Esophagus muscularis mucosa (tissue), 4 donors: ENCODE measurements at regions of chr3 and their contacts with region 1.

Region 1: GRCh38 chr3:184811999-184812661 is at the start of gene VPS8:
- DNase-seq: peak; percentile 98
- H3K4me3 ChIP-seq: peak within 1 kb of the TSS; percentile 80 to 91 (median 88)
- H3K27ac ChIP-seq: peak within 1 kb of the TSS; percentile 79 to 82 (median 80)
- H3K4me1 ChIP-seq: peaks cover 18 to 27% (median 22%) of the 10 kb centered on the region in 4 donors
- H3K27me3 ChIP-seq: no peaks in the 10 kb centered on the region
- CTCF ChIP-seq: peak; percentile 69 to 85 (median 71)
- EP300 ChIP-seq: no peak
- POLR2A ChIP-seq: peak; percentile 76
- total RNA-seq, gene VPS8: 31.0 to 39.0 (median 32.6) TPM

Region 2: GRCh38 chr3:183884427-183885296 is 927.5 kb before region 1 on chr3 and contains the start of gene PARL:
- intact Hi-C with region 1: loop called (anchors 5 kb)
- DNase-seq: peak; percentile 98
- H3K4me3 ChIP-seq: peak within 1 kb of the TSS; percentile 94 to 98 (median 97)
- H3K27ac ChIP-seq: peak within 1 kb of the TSS; percentile 78 to 86 (median 80)
- H3K4me1 ChIP-seq: peaks cover 23 to 35% (median 27%) of the 10 kb centered on the region in 4 donors
- H3K27me3 ChIP-seq: no peaks in the 10 kb centered on the region
- CTCF ChIP-seq: peak; percentile 95 to 98 (median 96)
- EP300 ChIP-seq: no peak
- POLR2A ChIP-seq: no peak
- total RNA-seq, gene PARL: 40.2 to 57.1 (median 51.2) TPM

Region 3: GRCh38 chr3:184620475-184621119 is 191.5 kb before region 1 on chr3:
- intact Hi-C with region 1: no loop called
- DNase-seq: no peak
- H3K4me3 ChIP-seq: no peak overlapping the region
- H3K27ac ChIP-seq: no peak overlapping the region
- H3K4me1 ChIP-seq: peaks cover 15 to 27% (median 18%) of the 10 kb centered on the region in 4 donors
- H3K27me3 ChIP-seq: no peaks in the 10 kb centered on the region
- CTCF ChIP-seq: no peak
- EP300 ChIP-seq: no peak
- POLR2A ChIP-seq: no peak

Region 4: GRCh38 chr3:184676927-184677326 is 135.2 kb before region 1 on chr3:
- intact Hi-C with region 1: no loop called
- DNase-seq: no peak
- H3K4me3 ChIP-seq: no peak overlapping the region
- H3K27ac ChIP-seq: no peak overlapping the region
- H3K4me1 ChIP-seq: peaks cover 7 to 26% (median 24%) of the 10 kb centered on the region in 4 donors
- H3K27me3 ChIP-seq: no peaks in the 10 kb centered on the region
- CTCF ChIP-seq: no peak
- EP300 ChIP-seq: no peak
- POLR2A ChIP-seq: no peak